ENCODE measurements at regions of chr17 and their contacts with region 1.

Region 1: GRCh38 chr17:59846394-59847165 is 46.2 kb downstream of the TUBD1 start:
- DNase-seq: no peak
- H3K4me3 Mint-ChIP-seq: peak overlapping the region; percentile 3
- H3K27ac Mint-ChIP-seq: peak overlapping the region; percentile 78
- H3K4me1 Mint-ChIP-seq: peaks cover 80% of the 10 kb centered on the region
- H3K27me3 Mint-ChIP-seq: no peaks in the 10 kb centered on the region

Region 2: DNA sequence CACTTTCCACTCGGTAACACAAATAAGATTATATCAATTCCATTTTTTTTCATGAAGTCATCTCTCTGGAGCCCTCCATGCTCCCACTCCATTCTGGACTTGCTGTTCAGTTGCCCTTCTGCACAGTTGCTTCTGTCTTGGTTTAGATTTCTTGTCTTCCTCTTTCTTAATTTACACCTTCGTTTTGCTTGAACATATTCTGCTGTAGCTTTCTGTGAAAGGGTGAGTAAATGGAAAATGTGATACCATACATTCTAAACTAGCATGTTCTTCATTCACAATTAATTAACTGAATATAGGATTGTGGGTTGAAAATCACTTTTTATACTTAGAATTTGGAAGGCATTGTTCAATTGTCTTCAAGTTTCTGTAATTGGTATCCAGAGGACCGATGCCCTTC is 69.5 kb before region 1 on chr17:
- CTCF ChIA-PET with region 1: no interaction called
- DNase-seq: no peak
- H3K4me3 Mint-ChIP-seq: no peak overlapping the region
- H3K27ac Mint-ChIP-seq: no peak overlapping the region
- H3K4me1 Mint-ChIP-seq: peaks cover 30% of the 10 kb centered on the region
- H3K27me3 Mint-ChIP-seq: no peaks in the 10 kb centered on the region

Region 3: GRCh38 chr17:59859444-59860025 is 13.0 kb after region 1 on chr17:
- CTCF ChIA-PET with region 1: interaction called, 16 read pairs
- DNase-seq: no peak
- H3K4me3 Mint-ChIP-seq: no peak overlapping the region
- H3K27ac Mint-ChIP-seq: no peak overlapping the region
- H3K4me1 Mint-ChIP-seq: peaks cover 23% of the 10 kb centered on the region
- H3K27me3 Mint-ChIP-seq: no peaks in the 10 kb centered on the region